Activated T-helper 1 cell treated with anti-CD3 and anti-CD28 coated beads, Interleukin-12 subunit alpha, Interleukin-12 subunit beta, Interleukin-2, Interleukin-4 antibody, amounts not matched to agents 30 ng/mL and 10 ng/mL and 1 ng/mL, durations not matched to agents 14 hours and 24 hours and 36 hours (primary cell): ENCODE measurements at regions of chr2 and their contacts with region 1.

Region 1: GRCh38 chr2:85728883-85729824 is 24.6 kb upstream of the ATOH8 start:
- DNase-seq: peak; percentile 65
- H3K4me3 Mint-ChIP-seq: no peak overlapping the region
- H3K27ac Mint-ChIP-seq: no peak overlapping the region
- H3K4me1 Mint-ChIP-seq: peaks cover 13% of the 10 kb centered on the region
- H3K27me3 Mint-ChIP-seq: peaks cover 17% of the 10 kb centered on the region

Region 2: GRCh38 chr2:85504778-85505323 is 224.3 kb before region 1 on chr2:
- intact Hi-C with region 1: no loop called
- DNase-seq: no peak
- H3K4me3 Mint-ChIP-seq: no peak overlapping the region
- H3K27ac Mint-ChIP-seq: no peak overlapping the region
- H3K4me1 Mint-ChIP-seq: no peaks in the 10 kb centered on the region
- H3K27me3 Mint-ChIP-seq: peaks cover 2% of the 10 kb centered on the region

Region 3: DNA sequence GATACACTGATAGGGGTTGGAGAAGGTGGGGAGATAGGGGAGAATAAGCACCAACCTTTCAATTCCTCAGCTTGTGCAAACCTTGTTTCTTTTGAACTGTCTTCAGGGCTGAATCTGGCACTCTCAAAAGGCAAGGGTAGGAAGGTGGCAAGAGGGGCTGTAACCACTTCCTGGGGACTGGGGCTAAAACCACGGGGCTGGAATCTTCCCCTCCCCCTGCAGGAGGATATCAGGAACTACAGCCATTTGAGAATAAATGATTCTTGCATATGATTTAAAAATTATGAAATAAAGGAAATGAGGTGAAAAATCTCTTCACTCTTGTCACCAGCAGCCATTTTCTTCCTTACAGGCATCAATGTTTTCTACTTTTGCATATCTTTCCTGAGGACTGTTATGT is 75.4 kb after region 1 on chr2:
- intact Hi-C with region 1: loop called (anchors 2 kb)
- DNase-seq: peak; percentile 10
- H3K4me3 Mint-ChIP-seq: no peak overlapping the region
- H3K27ac Mint-ChIP-seq: no peak overlapping the region
- H3K4me1 Mint-ChIP-seq: peaks cover 13% of the 10 kb centered on the region
- H3K27me3 Mint-ChIP-seq: peaks cover 15% of the 10 kb centered on the region

Region 4: DNA sequence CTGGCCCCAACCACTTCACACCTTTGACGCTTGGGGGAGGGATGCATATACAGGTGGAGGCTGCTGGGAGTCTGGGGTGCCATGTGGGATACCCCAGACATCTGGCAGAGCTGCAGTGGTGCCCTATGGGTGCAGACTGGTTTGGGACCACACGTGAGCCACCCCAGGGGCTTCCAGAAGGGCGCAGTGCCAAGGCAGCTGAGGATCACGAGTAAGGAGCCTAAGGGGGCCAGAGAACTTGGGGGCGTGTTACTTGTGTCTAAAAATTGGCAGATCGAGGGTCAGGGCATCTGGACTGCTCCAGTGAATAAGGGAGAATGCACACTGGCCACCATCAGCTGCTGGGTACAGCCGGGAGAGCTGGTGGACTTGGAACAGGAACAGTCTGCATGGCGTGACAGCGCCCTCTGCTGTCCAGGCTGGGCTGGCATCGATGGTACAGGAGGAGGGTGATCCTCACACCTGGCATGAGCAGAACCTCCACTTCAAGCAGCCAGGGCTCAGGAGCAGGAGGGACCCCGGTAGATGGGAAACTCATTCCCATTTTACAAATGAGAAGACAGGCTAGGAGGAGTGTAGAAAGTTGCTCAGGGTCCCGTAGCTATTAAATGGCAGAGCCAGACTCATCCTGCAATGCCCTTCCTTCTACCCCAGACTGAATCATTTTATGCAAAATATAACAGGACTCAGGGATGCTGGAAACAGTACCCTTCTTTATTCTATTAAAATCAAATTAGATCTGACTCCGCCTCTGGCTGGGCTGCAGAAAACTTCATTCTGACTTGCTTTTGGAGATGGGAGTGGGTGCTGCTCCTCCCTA is 85.0 kb after region 1 on chr2:
- intact Hi-C with region 1: loop called (anchors 1 kb)
- DNase-seq: peak; percentile 74
- H3K4me3 Mint-ChIP-seq: no peak overlapping the region
- H3K27ac Mint-ChIP-seq: no peak overlapping the region
- H3K4me1 Mint-ChIP-seq: peaks cover 8% of the 10 kb centered on the region
- H3K27me3 Mint-ChIP-seq: peaks cover 35% of the 10 kb centered on the region

Region 5: DNA sequence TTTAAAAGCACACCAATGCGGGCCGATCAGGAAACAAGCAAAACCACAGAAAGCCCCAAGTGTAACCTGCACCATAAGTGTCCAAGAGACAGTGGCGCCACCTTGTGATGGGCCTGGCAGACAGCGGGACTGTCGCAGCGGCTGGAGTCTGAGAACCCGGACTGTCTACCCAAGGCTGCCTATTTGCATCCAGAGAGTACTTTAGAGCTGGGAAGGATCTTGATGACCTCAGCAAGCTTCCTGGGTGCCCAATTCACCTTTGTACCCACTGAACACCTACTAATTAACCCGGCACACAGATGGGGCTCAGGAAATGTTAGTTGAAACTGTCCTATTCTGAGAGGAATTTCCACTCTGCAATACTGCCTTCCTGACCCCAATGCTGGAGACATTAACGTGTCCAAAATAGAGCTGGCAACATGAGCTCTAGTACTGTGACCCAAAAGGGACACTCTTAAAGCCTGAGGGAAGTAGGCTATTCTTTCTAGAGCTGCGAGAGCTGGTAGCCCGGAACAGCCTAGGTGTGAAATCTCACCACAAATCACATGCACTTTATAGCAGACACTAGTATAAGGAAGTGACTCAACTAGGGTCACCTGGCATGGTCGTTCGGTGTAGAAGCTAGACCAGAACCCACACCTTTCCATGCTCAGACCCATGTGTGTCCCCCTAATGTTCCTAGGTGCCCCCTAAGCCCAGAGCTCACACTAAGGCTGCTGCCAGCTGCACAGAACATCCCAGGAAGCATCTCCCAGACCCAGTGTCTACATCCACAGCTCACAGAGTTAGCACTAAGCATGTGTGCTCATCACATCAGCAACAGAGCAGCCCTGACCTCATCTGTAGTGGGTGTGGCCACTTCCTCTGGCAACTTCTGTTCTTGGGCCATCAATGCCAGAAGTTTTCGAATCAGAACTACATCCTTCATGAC is 351.1 kb after region 1 on chr2:
- intact Hi-C with region 1: loop called (anchors 1 kb)
- DNase-seq: peak; percentile 73
- H3K4me3 Mint-ChIP-seq: no peak overlapping the region
- H3K27ac Mint-ChIP-seq: peak overlapping the region; percentile 71
- H3K4me1 Mint-ChIP-seq: peaks cover 47% of the 10 kb centered on the region
- H3K27me3 Mint-ChIP-seq: no peaks in the 10 kb centered on the region